Activated CD4-positive, alpha-beta T cell treated with anti-CD3 and anti-CD28 coated beads, Interleukin-2, amount 10 ng/mL, durations not matched to agents 24 days and 14 days (primary cell): ENCODE measurements at regions of chrX and their contacts with region 1.

Region 1: GRCh38 chrX:19887911-19888879 is 795 bp upstream of the SH3KBP1 start:
- DNase-seq: peak; percentile 82
- H3K4me3 Mint-ChIP-seq: peak overlapping the region; percentile 82
- H3K27ac Mint-ChIP-seq: peak overlapping the region; percentile 82
- H3K4me1 Mint-ChIP-seq: peaks cover 27% of the 10 kb centered on the region
- H3K27me3 Mint-ChIP-seq: no peaks in the 10 kb centered on the region

Region 2: GRCh38 chrX:19372170-19372546 is 516.0 kb before region 1 on chrX:
- intact Hi-C with region 1: loop called (anchors 10 kb)
- DNase-seq: peak; percentile 88
- H3K4me3 Mint-ChIP-seq: peak overlapping the region; percentile 87
- H3K27ac Mint-ChIP-seq: no peak overlapping the region
- H3K4me1 Mint-ChIP-seq: peaks cover 6% of the 10 kb centered on the region
- H3K27me3 Mint-ChIP-seq: peaks cover 2% of the 10 kb centered on the region

Region 3: GRCh38 chrX:19593690-19594089 is 294.5 kb before region 1 on chrX:
- intact Hi-C with region 1: loop called (anchors 1 kb)
- DNase-seq: peak; percentile 76
- H3K4me3 Mint-ChIP-seq: no peak overlapping the region
- H3K27ac Mint-ChIP-seq: no peak overlapping the region
- H3K4me1 Mint-ChIP-seq: peaks cover 9% of the 10 kb centered on the region
- H3K27me3 Mint-ChIP-seq: no peaks in the 10 kb centered on the region

Region 4: GRCh38 chrX:19799319-19800182 is 88.6 kb before region 1 on chrX:
- intact Hi-C with region 1: loop called (anchors 5 kb)
- DNase-seq: peak; percentile 80
- H3K4me3 Mint-ChIP-seq: peak overlapping the region; percentile 85
- H3K27ac Mint-ChIP-seq: peak overlapping the region; percentile 94
- H3K4me1 Mint-ChIP-seq: peaks cover 60% of the 10 kb centered on the region
- H3K27me3 Mint-ChIP-seq: no peaks in the 10 kb centered on the region

Region 5: DNA sequence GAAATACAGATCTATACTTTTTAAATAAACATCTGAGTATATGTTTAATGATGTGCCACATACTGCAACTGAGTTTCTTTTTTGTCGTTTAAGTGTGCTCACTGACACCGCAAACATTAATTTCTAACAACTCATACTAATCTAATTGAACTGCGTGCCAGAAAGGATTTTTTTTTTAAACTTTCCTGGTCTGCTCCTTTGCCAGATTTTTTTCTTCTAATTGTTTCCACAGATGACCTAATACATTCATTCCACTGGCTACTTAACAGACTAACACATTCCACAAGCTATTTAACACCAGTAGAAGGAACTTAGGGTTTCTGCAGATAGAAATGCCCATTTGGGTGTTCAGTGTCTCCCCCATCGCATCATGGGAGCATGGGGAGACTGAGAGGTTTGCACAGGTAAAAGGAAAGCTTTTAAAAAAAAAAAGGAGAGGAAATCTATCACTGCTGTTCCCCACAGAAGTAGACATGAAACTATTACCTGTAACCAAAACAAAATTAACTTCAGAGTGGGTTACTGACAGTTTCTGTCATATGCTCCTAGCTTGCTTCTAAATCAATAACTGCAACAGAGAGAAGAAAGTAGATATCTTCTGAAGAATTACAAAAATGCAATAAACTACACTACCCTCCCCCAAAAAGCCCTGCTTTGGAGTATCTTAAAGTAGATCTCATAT is 32.4 kb before region 1 on chrX:
- intact Hi-C with region 1: no loop called
- DNase-seq: no peak
- H3K4me3 Mint-ChIP-seq: peak overlapping the region; percentile 75
- H3K27ac Mint-ChIP-seq: peak overlapping the region; percentile 92
- H3K4me1 Mint-ChIP-seq: peaks cover 27% of the 10 kb centered on the region
- H3K27me3 Mint-ChIP-seq: no peaks in the 10 kb centered on the region

Region 6: GRCh38 chrX:19870710-19871490 is 17.3 kb before region 1 on chrX:
- intact Hi-C with region 1: loop called (anchors 2 kb)
- DNase-seq: no peak
- H3K4me3 Mint-ChIP-seq: no peak overlapping the region
- H3K27ac Mint-ChIP-seq: peak overlapping the region; percentile 86
- H3K4me1 Mint-ChIP-seq: peaks cover 56% of the 10 kb centered on the region
- H3K27me3 Mint-ChIP-seq: no peaks in the 10 kb centered on the region